G401 (cell line): ENCODE measurements at regions of chr9 and their contacts with region 1.

Region 1: GRCh38 chr9:37645903-37646506 is 4.7 kb upstream of the FRMPD1 start:
- DNase-seq: no peak

Region 2: DNA sequence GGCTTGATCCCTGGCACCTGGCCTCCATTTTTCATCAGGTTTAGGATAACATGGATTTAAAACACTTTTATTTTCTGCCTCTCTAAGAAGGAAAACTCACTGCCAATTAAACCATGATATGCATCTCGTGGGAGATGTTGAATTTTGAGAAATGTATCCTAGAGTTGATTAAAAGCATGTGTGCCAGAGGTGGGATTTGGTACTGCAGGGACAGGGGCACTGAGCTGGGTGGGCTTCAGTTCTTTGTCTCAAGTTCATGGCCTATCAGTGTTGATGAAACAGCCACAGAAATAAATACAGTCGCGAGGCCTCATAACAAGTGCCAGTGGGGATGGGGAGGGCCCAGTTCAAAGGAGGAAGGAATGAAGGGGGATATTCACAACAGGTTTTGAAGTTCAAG is 125.4 kb before region 1 on chr9:
- in situ Hi-C with region 1: no loop called
- DNase-seq: no peak

Region 3: DNA sequence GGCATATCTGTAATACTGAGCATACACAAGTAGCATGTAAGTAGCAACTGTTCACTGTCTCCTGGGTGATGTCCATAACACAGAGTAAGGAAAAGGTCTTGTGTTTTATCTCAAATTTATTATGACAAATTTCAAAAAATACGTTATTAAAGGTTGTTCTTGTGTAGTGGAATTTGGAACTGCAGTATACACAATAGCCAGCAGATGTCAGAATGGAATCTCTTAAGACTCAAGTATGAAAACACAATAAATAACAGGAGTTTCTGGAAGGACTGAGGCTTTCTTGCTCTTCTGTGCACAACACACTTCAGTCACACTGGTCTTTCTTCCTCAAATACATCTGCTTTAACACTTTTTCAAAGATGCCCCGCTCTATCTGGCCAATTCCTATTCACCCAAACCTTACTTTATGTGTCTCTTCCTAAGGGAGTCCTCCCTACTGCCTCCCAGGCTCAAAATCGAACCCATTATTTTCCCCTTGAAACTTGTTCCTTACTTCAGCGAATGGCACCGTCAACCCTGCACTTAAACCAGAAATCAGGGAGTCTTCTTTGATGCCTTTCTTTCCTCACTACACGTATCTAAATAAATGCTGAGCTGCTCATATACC is 63.4 kb before region 1 on chr9:
- in situ Hi-C with region 1: loop called (anchors 10 kb)
- DNase-seq: peak; percentile 59